Activated naive CD4-positive, alpha-beta T cell treated with anti-CD3 and anti-CD28 coated beads for 36 hours (primary cell): ENCODE measurements at regions of chr22 and their contacts with region 1.

Region 1: GRCh38 chr22:30178181-30179126 is 68.1 kb downstream of the LIF start:
- DNase-seq: peak; percentile 87
- H3K4me3 Mint-ChIP-seq: peak overlapping the region; percentile 23
- H3K27ac Mint-ChIP-seq: peak overlapping the region; percentile 99
- H3K4me1 Mint-ChIP-seq: peaks cover 74% of the 10 kb centered on the region
- H3K27me3 Mint-ChIP-seq: no peaks in the 10 kb centered on the region

Region 2: GRCh38 chr22:30104501-30105156 is 73.8 kb before region 1 on chr22:
- CTCF ChIA-PET with region 1: interaction called, 14 read pairs
- intact Hi-C with region 1: no loop called
- DNase-seq: no peak
- H3K4me3 Mint-ChIP-seq: no peak overlapping the region
- H3K27ac Mint-ChIP-seq: peak overlapping the region; percentile 24
- H3K4me1 Mint-ChIP-seq: peaks cover 38% of the 10 kb centered on the region
- H3K27me3 Mint-ChIP-seq: no peaks in the 10 kb centered on the region

Region 3: DNA sequence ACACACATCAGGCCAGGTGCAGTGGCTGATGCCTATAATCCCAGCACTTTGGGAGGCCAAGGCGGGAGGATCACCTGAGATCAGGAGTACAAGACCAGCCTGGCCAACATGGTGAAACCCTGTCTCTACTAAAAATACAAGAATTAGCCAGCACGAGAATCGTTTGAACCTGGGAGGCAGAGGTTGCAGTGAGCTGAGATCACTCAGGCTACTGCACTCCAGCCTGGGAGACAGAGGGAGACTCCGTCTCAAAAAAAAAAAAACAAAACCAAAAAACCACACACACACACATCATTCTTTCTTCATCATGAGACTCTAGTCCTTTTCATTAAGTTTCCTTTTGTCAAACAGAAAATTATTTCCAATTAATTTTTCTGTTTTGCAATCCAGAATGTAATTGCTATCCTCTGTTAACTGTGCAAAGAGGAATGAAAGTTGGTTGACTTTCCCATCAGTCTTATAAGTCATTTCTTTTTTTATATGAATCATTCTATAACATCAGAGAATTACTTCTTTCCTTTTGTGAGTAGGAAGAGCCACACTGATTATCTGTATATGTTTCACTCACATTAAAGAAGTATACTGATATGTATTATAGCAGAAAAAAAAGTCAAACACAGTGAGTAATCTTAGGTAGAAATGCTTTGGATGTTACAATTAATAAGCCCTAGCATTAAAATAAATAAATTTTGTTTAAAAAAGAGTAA is 46.0 kb before region 1 on chr22:
- CTCF ChIA-PET with region 1: no interaction called
- intact Hi-C with region 1: loop called (anchors 1 kb)
- DNase-seq: no peak
- H3K4me3 Mint-ChIP-seq: no peak overlapping the region
- H3K27ac Mint-ChIP-seq: peak overlapping the region; percentile 73
- H3K4me1 Mint-ChIP-seq: peaks cover 19% of the 10 kb centered on the region
- H3K27me3 Mint-ChIP-seq: no peaks in the 10 kb centered on the region

Region 4: DNA sequence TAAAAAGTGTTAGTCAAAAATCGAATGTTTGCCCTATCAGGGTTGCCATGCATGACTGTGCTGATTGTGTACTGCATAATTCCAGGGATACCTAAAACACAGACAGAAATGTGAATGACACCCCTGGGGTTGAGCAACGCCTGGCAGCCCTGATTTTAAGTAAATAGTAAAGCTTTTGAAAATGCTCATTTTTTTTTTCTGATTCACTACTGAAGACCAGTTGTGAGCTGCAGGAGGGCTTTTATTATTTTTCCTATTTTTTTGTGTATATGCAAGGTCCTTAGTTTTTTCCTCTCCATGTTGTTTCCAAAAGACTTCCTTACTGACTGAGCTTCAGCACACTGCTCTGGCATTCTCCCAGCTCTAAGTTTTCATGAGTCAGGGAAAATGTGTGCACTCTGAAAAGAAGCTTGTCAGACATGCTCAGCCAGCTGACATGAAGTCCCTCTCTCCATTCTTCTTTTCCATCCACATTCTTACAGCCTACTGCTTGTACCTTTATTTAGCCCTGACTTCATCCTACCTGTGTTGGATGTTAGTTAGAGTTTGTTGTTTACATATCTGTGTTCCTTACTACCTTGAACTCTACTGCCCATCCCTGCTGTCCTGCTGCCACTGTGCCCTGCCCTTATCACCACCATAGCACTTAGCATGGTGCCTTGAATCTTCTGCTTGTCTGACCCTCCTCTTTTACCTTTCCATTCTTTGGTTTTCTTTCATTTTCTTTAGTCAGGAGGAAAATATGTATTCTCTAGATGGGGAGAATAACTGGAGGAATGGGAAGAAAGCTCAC is 18.7 kb before region 1 on chr22:
- CTCF ChIA-PET with region 1: interaction called, 26 read pairs
- intact Hi-C with region 1: loop called (anchors 1 kb)
- DNase-seq: no peak
- H3K4me3 Mint-ChIP-seq: no peak overlapping the region
- H3K27ac Mint-ChIP-seq: peak overlapping the region; percentile 93
- H3K4me1 Mint-ChIP-seq: peaks cover 63% of the 10 kb centered on the region
- H3K27me3 Mint-ChIP-seq: no peaks in the 10 kb centered on the region

Region 5: DNA sequence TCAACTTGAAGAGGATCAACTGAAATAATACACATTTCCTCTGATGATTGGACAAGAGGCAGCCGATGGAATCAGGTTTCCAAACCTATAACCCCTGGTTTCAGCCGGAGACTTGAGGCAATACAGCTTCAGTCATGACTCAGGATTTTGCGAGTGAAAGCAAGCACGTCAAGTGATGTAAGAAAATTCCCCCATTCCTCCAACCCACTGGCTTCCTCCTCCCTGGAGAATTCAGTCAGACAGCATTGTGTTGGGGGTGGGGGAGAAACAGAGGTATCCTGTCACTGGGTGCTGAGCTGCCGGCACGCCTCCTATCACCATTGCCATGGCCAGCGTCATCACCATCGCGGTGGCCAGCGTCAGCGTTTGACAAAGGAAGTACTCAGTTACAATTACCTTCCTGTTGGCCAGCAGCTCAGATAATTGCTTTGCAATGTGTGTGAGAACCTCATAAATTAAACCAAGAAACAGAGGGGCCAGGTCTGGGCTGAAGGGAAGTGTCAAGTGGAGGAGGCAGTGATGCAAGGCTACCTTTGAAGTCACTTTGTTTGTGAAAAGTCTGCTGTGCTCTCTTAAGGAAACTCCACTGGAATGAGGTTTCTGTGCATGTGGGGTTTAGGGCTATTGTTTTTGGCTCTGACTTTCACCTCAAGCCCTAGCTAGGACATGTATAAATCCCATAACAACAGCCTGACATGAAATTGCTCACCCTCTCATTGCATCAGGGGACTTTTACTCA is 17.9 kb after region 1 on chr22:
- CTCF ChIA-PET with region 1: interaction called, 6 read pairs
- intact Hi-C with region 1: loop called (anchors 1 kb)
- DNase-seq: peak; percentile 84
- H3K4me3 Mint-ChIP-seq: peak overlapping the region; percentile 57
- H3K27ac Mint-ChIP-seq: peak overlapping the region; percentile 95
- H3K4me1 Mint-ChIP-seq: peaks cover 70% of the 10 kb centered on the region
- H3K27me3 Mint-ChIP-seq: no peaks in the 10 kb centered on the region

Region 6: DNA sequence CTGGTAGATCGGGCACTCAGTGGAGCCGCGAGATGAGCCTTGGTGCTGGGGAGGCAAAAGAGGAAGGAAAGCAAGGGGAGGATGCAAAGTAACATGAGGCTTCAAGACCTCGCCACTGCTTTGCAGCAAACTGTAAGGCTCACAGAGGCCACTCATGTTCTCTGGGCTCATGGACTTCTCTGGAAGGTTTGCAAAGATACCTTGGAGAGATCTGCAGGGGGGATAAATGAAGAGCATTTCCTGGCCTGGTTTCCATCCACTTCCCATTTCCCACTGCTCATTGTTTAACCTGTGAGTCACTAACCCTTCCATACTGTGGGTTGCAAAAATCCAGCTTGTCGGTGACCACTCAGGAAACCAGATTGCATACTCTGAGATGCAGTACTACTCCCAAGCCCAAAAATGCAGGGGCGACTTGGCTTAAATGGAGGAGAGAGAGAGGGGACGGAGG is 554.8 kb after region 1 on chr22:
- CTCF ChIA-PET with region 1: no interaction called
- intact Hi-C with region 1: no loop called
- DNase-seq: no peak
- H3K4me3 Mint-ChIP-seq: no peak overlapping the region
- H3K27ac Mint-ChIP-seq: no peak overlapping the region
- H3K4me1 Mint-ChIP-seq: no peaks in the 10 kb centered on the region
- H3K27me3 Mint-ChIP-seq: no peaks in the 10 kb centered on the region